ENCODE measurements at regions of chr1 and their contacts with region 1.

Region 1: DNA sequence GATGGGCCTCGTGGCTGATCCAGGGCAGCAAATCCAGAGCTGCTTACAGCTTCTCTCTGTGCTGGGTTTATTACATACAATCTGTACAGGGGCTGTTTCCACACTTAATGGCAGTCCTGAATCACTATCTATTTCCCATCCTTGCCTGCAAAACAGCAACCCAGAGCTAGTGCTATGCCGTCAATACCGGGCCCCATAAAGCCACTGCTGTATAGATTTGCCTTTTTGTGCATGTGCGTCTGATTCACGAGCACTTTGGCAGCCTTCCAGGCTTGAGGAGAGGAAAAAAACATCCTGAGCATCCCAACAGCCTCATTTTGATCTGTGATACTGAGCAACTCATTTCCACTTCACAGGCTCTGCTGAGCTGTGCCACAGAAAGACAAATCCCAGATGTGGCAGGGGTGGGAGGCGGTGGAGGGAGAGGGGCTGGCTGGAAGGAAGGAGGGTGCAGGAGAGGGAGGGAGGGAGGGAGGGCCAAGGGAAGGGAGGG is 65.2 kb upstream of the TARBP1 start:
- DNase-seq: peak; percentile 34 to 53 (median 38)
- H3K4me3 ChIP-seq: no peak overlapping the region
- H3K4me3 Mint-ChIP-seq: no peak overlapping the region
- H3K27ac ChIP-seq: no peak overlapping the region
- H3K27ac Mint-ChIP-seq: peak overlapping the region in 5 of 7 donors; percentile 11 to 45 (median 24)
- H3K4me1 ChIP-seq: peaks cover 6% of the 10 kb centered on the region in 2 donors
- H3K4me1 Mint-ChIP-seq: peaks cover 19% of the 10 kb centered on the region
- H3K27me3 ChIP-seq: no peaks in the 10 kb centered on the region
- H3K27me3 Mint-ChIP-seq: peaks cover 4 to 11% (median 5%) of the 10 kb centered on the region in 3 donors
- CTCF ChIP-seq: no peak

Region 2: GRCh38 chr1:234599617-234600417 is 55.7 kb after region 1 on chr1:
- intact Hi-C with region 1: loop called in 1 of 2 experiments (anchors 10 kb)
- DNase-seq: peak; percentile 61 to 70 (median 65)
- H3K4me3 ChIP-seq: peak overlapping the region; percentile 46 to 95 (median 52)
- H3K4me3 Mint-ChIP-seq: peak overlapping the region; percentile 88 to 100
- H3K27ac ChIP-seq: peak overlapping the region; percentile 81 to 89
- H3K27ac Mint-ChIP-seq: peak overlapping the region; percentile 93 to 100 (median 93)
- H3K4me1 ChIP-seq: peaks cover 57 to 66% of the 10 kb centered on the region in 2 donors
- H3K4me1 Mint-ChIP-seq: peaks cover 42% of the 10 kb centered on the region
- H3K27me3 ChIP-seq: no peaks in the 10 kb centered on the region
- H3K27me3 Mint-ChIP-seq: peaks cover 0 to 2% (median 0%) of the 10 kb centered on the region in 3 donors
- CTCF ChIP-seq: no peak

Region 3: GRCh38 chr1:234670967-234671626 is 127.0 kb after region 1 on chr1:
- intact Hi-C with region 1: no loop called
- DNase-seq: no peak
- H3K4me3 ChIP-seq: no peak overlapping the region
- H3K4me3 Mint-ChIP-seq: no peak overlapping the region
- H3K27ac ChIP-seq: no peak overlapping the region
- H3K27ac Mint-ChIP-seq: no peak overlapping the region
- H3K4me1 ChIP-seq: peaks cover 12 to 15% of the 10 kb centered on the region in 2 donors
- H3K4me1 Mint-ChIP-seq: peaks cover 19% of the 10 kb centered on the region
- H3K27me3 ChIP-seq: no peaks in the 10 kb centered on the region
- H3K27me3 Mint-ChIP-seq: peaks cover 0 to 2% (median 0%) of the 10 kb centered on the region in 3 donors
- CTCF ChIP-seq: no peak